Activated CD8-positive, alpha-beta T cell treated with anti-CD3 and anti-CD28 coated beads, Interleukin-2, amount 10 ng/mL, durations not matched to agents 7 days and 5 days (primary cell): ENCODE measurements at regions of chr12 and their contacts with region 1.

Region 1: DNA sequence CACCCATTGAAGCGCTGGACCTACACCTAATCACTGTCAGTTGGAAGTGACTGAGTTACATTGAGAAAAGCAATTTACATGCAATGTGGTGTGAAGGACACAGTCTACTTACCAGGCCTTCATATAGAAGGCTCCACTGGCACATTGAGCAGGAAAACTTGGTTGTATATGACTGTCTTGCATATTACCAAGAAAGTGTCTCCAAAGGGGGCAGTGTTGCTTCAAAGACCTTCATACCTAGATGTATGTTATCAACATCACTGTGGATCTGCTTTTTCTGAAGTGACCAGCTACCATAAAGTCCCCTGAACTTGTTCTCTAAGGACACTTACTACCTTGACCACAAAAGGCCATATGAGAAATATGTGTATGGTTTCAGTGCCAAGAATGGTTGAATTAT is 64.1 kb downstream of the NELL2 start:
- DNase-seq: peak; percentile 79
- ATAC-seq: peak; percentile 92
- H3K4me3 Mint-ChIP-seq: no peak overlapping the region
- H3K27ac Mint-ChIP-seq: no peak overlapping the region
- H3K4me1 Mint-ChIP-seq: peaks cover 42% of the 10 kb centered on the region
- H3K27me3 Mint-ChIP-seq: no peaks in the 10 kb centered on the region

Region 2: GRCh38 chr12:44689587-44689986 is 122.5 kb before region 1 on chr12:
- CTCF ChIA-PET with region 1: no interaction called
- POLR2A ChIA-PET with region 1: no interaction called
- DNase-seq: no peak
- ATAC-seq: no peak
- H3K4me3 Mint-ChIP-seq: no peak overlapping the region
- H3K27ac Mint-ChIP-seq: no peak overlapping the region
- H3K4me1 Mint-ChIP-seq: no peaks in the 10 kb centered on the region
- H3K27me3 Mint-ChIP-seq: no peaks in the 10 kb centered on the region

Region 3: GRCh38 chr12:44774815-44775411 is 37.1 kb before region 1 on chr12:
- CTCF ChIA-PET with region 1: interaction called, 16 read pairs
- POLR2A ChIA-PET with region 1: interaction called, 3 read pairs
- DNase-seq: peak; percentile 72
- ATAC-seq: peak; percentile 57
- H3K4me3 Mint-ChIP-seq: no peak overlapping the region
- H3K27ac Mint-ChIP-seq: no peak overlapping the region
- H3K4me1 Mint-ChIP-seq: peaks cover 7% of the 10 kb centered on the region
- H3K27me3 Mint-ChIP-seq: no peaks in the 10 kb centered on the region

Region 4: DNA sequence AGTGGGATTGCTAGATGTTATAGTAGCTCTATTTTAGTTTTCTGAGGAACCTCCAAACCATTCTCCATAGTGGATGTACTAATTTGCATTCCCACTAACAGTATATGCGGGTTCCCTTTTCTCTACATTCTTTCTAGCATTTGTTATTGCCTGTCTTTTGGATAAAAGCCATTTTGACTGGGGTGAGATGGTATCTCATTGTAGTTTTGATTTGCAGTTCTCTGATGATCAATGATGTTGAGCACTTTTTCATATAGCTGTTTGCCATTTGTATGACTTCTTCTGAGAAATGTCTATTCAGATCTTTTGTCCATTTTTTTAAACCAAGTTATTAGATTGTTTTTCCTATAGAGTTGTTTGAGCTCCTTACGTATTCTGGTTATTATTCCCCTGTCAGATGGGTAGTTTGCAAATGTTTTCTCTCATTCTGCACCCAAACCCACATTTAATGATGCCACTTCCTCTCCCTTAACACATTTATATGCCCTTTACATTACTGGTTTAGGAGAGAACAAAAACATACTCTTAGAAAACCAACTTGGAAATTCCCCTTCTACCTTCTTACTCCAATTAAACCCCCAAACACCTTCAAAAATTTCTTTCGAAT is 15.9 kb after region 1 on chr12:
- CTCF ChIA-PET with region 1: interaction called, 13 read pairs
- POLR2A ChIA-PET with region 1: no interaction called
- DNase-seq: no peak
- ATAC-seq: peak; percentile 61
- H3K4me3 Mint-ChIP-seq: peak overlapping the region; percentile 64
- H3K27ac Mint-ChIP-seq: peak overlapping the region; percentile 87
- H3K4me1 Mint-ChIP-seq: peaks cover 67% of the 10 kb centered on the region
- H3K27me3 Mint-ChIP-seq: no peaks in the 10 kb centered on the region

Region 5: DNA sequence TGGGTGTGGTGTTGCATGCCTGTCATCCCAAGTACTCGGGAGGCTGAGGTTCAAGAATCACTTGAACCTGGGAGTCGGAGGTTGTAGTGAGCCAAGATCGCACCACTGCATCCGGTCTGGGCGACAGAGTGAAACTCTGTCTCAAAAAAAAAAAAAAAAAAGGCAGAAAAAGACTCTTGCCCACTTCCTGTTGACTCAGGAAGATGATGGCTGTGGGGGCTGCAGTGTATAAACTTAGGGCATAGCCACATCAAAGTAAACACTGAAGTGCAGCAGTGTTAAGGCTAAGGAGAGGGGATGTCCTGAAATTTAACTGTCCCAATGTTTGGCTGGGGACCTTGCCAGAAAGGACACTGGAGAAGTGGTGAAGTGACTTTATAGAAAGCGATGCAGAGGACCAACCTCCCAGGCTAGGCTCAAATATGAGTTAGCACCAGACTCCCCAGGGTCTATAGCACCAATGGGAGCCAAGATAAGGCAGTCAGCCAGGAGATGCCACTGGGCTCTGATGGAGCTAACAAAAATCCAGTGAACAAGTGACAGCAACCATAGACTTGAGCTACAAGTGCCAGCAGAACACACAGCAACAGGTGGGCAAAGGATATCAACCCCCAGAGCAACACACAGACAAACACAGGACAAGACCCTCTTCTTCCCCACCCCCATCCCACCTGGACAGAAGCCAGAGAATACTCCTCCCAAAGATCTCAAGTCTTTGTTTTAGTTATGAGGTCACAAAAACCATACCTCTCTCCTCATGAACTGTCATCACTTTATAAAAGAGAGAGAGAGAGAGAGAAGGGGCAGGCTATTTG is 36.0 kb after region 1 on chr12:
- CTCF ChIA-PET with region 1: interaction called, 32 read pairs
- POLR2A ChIA-PET with region 1: interaction called, 3 read pairs
- DNase-seq: peak; percentile 86
- ATAC-seq: peak; percentile 90
- H3K4me3 Mint-ChIP-seq: peak overlapping the region; percentile 61
- H3K27ac Mint-ChIP-seq: peak overlapping the region; percentile 96
- H3K4me1 Mint-ChIP-seq: peaks cover 88% of the 10 kb centered on the region
- H3K27me3 Mint-ChIP-seq: no peaks in the 10 kb centered on the region

Region 6: DNA sequence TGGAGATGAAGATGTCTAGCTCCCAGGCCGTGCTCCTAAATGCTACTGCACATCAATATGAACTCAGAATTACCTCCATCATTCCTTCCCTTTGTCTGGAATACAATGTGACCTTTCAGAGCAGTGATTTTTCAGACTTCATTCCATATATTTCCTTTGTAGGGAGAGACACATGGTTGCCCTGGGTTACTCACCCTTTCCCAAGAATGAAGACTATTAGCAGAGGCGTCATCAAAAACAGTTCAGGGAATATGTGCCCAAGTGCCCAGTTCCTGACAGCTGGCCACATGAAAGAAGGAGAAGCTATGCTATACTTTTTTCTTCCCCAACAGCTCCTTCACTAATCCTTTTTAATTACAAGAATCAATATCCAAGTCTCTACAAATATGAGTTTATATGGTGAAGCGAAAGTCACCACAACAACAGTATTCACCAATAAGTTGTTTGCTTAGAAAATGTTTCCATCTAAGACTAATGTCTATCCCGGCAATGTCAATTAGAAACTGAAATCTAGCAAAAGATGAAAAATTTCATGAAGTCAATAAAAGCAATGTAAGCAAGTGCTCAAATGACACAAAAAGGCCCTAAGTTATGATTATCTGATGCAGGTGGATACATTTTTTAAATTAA is 46.3 kb after region 1 on chr12:
- CTCF ChIA-PET with region 1: interaction called, 14 read pairs
- POLR2A ChIA-PET with region 1: no interaction called
- DNase-seq: no peak
- ATAC-seq: no peak
- H3K4me3 Mint-ChIP-seq: no peak overlapping the region
- H3K27ac Mint-ChIP-seq: no peak overlapping the region
- H3K4me1 Mint-ChIP-seq: peaks cover 65% of the 10 kb centered on the region
- H3K27me3 Mint-ChIP-seq: no peaks in the 10 kb centered on the region

Region 7: GRCh38 chr12:44869503-44869902 is 57.4 kb after region 1 on chr12:
- CTCF ChIA-PET with region 1: interaction called, 142 read pairs
- POLR2A ChIA-PET with region 1: no interaction called
- DNase-seq: no peak
- ATAC-seq: no peak
- H3K4me3 Mint-ChIP-seq: no peak overlapping the region
- H3K27ac Mint-ChIP-seq: peak overlapping the region; percentile 10
- H3K4me1 Mint-ChIP-seq: peaks cover 63% of the 10 kb centered on the region
- H3K27me3 Mint-ChIP-seq: no peaks in the 10 kb centered on the region

Region 8: GRCh38 chr12:44930972-44931600 is 119.0 kb after region 1 on chr12:
- CTCF ChIA-PET with region 1: interaction called, 50 read pairs
- POLR2A ChIA-PET with region 1: no interaction called
- DNase-seq: no peak
- ATAC-seq: peak; percentile 55
- H3K4me3 Mint-ChIP-seq: no peak overlapping the region
- H3K27ac Mint-ChIP-seq: no peak overlapping the region
- H3K4me1 Mint-ChIP-seq: peaks cover 2% of the 10 kb centered on the region
- H3K27me3 Mint-ChIP-seq: peaks cover 2% of the 10 kb centered on the region